ENCODE measurements at regions of chr2 and their contacts with region 1.

Region 1: GRCh38 chr2:56898986-56899385 is 715.2 kb downstream of the CCDC85A start:
- DNase-seq: no peak
- ATAC-seq: no peak

Region 2: DNA sequence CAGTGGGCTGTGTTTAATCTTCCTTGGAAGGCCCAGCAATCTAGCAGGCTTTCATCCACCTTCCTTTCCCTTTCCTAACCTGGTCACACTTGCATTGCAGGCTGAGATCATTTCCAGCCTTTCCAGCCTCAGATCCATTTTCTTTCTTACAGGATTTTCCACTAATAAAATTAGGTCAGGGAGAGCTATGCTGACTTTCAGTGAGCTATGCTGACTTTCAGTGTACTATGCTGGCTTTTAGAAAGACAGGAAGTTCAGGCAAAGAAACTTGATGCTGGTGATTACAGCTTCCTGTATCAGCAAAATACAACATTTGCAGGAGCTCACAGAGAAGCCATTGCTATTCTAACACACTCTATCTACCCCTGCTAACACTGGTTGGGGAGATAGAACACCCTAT is 19.8 kb after region 1 on chr2:
- intact Hi-C with region 1: loop called in 1 of 2 experiments (anchors 2 kb)
- DNase-seq: no peak
- ATAC-seq: no peak

Measured in left colon (tissue), 2 donors.